Heart left ventricle (tissue), 16 donors: ENCODE measurements at regions of chr15 and their contacts with region 1.

Region 1: DNA sequence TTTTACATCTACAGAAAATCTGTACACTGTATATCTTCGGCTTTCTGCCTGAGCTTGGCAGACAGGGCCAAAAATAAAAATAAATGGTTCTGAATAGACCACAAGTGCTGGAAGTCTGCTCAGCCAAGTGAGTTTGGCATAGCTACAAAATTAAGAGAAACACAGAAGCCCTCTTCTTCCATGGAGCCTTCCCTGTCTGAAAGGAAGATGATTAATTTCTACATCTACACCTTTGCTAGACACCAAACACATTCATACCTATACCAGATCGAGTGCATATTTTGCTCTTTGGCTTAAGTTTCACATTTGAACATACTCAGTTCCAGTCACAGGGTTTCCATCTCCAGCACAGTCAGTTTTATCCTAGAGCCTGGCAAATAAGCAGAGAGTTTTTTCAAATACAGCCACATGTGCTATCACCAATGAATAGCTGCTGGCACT is 224.6 kb downstream of the GREM1 start:
- DNase-seq: no peak
- ATAC-seq: no peak
- H3K4me3 ChIP-seq: no peak overlapping the region
- H3K27ac ChIP-seq: peak overlapping the region in 1 of 12 donors; percentile 31
- H3K4me1 ChIP-seq: peaks cover 0 to 16% (median 3%) of the 10 kb centered on the region in 12 donors
- H3K27me3 ChIP-seq: no peaks in the 10 kb centered on the region
- CTCF ChIP-seq: no peak
- POLR2A ChIP-seq: no peak

Region 2: DNA sequence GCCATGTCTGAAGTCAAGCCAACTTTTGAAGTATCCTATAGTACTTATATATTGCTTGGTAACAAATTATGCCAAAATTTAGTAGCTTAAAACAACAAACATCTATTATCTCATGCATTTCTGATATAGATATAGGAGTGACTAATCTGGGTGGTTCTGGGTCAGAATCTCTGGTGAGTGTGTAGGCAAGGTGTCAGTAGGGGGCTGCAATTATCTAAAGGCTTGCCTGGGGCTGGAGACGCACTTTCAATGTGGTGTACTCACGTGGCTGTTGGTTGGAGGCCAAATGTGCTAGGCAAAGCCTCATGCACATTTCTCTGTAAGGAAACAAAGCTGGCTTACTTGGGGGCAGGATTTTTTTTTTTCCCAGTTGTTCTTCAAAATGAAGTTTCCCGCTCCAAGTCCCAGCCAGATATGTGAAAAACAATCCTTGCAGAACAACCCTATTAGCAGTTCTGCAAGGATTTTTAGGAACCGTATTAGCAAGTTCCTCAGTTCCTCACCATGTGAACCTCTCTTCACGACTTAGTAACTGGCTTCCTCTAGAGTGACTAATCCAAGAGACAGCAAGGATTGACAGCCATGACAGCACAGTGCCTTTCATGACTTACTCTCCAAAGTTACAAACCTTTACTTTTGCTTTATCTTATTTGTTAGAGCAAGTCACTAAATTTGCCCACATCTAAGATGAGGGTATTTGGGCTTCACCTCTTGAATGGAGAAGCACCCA is 198.8 kb before region 1 on chr15:
- intact Hi-C with region 1: no loop called
- DNase-seq: no peak
- ATAC-seq: no peak
- H3K4me3 ChIP-seq: no peak overlapping the region
- H3K27ac ChIP-seq: no peak overlapping the region
- H3K4me1 ChIP-seq: no peaks in the 10 kb centered on the region
- H3K27me3 ChIP-seq: no peaks in the 10 kb centered on the region
- CTCF ChIP-seq: no peak
- POLR2A ChIP-seq: no peak

Region 3: DNA sequence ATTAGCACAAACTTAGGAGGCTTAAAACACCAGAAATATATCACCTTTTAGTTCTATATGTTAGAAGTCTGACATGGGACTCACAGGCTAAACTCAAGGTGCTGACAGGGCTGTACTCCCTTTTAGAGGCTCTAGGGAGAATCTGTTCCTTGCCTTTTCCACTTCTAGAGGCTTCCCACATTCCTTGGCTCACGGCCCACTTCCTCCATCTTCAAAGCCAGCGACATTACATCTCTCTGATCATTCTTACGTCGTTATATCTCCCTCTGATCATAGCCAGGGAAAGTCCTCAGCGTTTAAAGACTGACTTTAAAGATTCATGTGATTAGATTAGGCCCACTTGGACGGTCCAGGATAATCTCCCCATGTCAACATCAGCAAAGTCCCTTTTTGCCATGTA is 58.3 kb before region 1 on chr15:
- intact Hi-C with region 1: loop called in 1 of 10 experiments (anchors 10 kb)
- DNase-seq: no peak
- ATAC-seq: no peak
- H3K4me3 ChIP-seq: no peak overlapping the region
- H3K27ac ChIP-seq: no peak overlapping the region
- H3K4me1 ChIP-seq: peaks cover 0 to 5% (median 0%) of the 10 kb centered on the region in 12 donors
- H3K27me3 ChIP-seq: no peaks in the 10 kb centered on the region
- CTCF ChIP-seq: no peak
- POLR2A ChIP-seq: no peak